Dorsolateral prefrontal cortex (tissue), 120 donors: ENCODE measurements at regions of chr19 and their contacts with region 1.

Region 1: GRCh38 chr19:45250832-45251451 is at the start of gene MARK4:
- DNase-seq: peak in 7 of 10 donors; percentile 12 to 65 (median 49)
- H3K4me3 ChIP-seq: peak within 1 kb of the TSS; percentile 62 to 90 (median 82)
- H3K27ac ChIP-seq: peak within 1 kb of the TSS in 51 of 59 donors; percentile 8 to 89 (median 68)
- H3K27me3 ChIP-seq: no peaks in the 10 kb centered on the region
- CTCF ChIP-seq: peak in 1 of 56 donors; percentile 21
- total RNA-seq, gene MARK4: 50.2 to 129 (median 88.9) TPM

Region 2: GRCh38 chr19:45001087-45001739 is 249.7 kb before region 1 on chr19 and contains the start of gene RELB:
- intact Hi-C with region 1: loop called in 1 of 2 experiments (anchors 10 kb)
- DNase-seq: peak; percentile 83 to 94 (median 89)
- H3K4me3 ChIP-seq: peak within 1 kb of the TSS; percentile 39 to 82 (median 70)
- H3K27ac ChIP-seq: peak within 1 kb of the TSS; percentile 41 to 97 (median 88)
- H3K27me3 ChIP-seq: no peaks in the 10 kb centered on the region
- CTCF ChIP-seq: no peak
- total RNA-seq, gene RELB: 1.5 to 13.8 (median 4.1) TPM

Region 3: DNA sequence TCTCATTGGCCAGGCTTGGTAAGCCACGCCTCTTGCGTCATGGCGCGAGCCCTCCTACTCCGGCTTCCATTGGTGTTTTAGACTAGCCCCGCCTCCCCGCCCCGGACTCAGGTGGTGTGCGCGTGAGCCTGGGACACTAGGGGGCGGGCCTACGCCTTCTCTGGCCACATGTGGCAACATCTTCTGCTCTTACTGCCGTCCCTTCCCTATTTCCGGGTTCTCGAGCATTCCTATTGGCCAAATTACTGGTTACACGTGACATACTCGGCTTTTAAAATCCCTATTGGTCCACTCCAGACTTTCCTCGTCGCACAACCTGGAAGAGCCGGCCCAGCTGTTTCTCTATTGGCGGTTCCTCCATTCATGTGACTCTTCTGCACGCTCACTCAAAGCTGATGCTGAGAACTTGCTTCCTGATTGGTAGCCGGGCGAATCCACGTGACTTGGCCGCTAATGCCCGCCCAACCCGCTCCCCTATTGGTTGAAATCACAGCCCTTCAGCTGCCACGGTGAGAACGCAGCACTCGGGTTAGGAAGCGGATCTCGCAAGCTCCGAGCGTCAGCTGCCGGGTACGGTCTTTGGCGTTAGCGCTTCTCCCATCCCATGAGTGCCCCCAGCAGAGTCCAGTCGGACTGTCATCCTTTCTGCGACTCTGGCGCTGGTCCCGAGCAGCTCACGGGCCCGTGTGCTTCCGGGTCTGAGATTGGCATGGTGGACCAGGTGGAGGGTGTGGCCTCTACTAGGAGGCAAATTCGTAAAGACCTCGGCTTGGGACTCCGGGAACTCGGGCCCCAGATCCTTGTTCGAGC is 72.5 kb before region 1 on chr19 and contains the start of gene BLOC1S3:
- intact Hi-C with region 1: loop called in 1 of 2 experiments (anchors 5 kb)
- DNase-seq: peak; percentile 99 to 100 (median 100)
- H3K4me3 ChIP-seq: peak within 1 kb of the TSS; percentile 69 to 99 (median 92)
- H3K27ac ChIP-seq: peak within 1 kb of the TSS in 58 of 59 donors; percentile 20 to 93 (median 84)
- H3K27me3 ChIP-seq: no peaks in the 10 kb centered on the region
- CTCF ChIP-seq: peak in 54 of 56 donors; percentile 32 to 88 (median 59)
- total RNA-seq, gene BLOC1S3: 9.7 to 23.1 (median 13.5) TPM